Right lobe of liver (tissue), 6 donors: ENCODE measurements at regions of chrX and their contacts with region 1.

Region 1: DNA sequence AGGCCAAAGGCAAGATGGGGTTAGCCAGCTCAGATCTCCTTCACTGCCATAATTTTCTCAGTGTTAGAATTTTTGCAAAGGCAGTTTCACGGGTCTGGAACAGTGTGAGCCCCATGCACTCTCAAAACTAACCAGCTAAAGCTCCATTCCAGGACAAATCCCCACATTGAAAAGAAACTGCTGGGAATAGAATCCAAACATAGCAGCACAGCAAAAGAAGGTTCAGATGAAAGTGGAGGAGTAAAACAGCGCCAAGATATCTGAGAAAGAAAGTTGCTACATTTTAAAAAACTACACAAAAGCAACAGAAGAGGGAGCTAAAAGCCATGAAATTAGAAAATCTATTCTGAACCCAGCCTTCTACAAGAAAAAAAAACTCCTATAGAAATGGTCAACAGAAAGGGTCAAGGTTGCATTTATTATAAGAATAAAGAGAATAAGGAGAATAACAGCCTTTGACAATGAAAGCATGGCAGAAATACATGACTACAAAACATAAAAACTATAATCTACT is 39.6 kb upstream of the SLC7A3 start:
- DNase-seq: no peak
- ATAC-seq: peak in 3 of 4 donors; percentile 45 to 49 (median 48)
- H3K4me3 ChIP-seq: no peak overlapping the region
- H3K27ac ChIP-seq: no peak overlapping the region
- H3K4me1 ChIP-seq: no peaks in the 10 kb centered on the region
- H3K27me3 ChIP-seq: no peaks in the 10 kb centered on the region
- CTCF ChIP-seq: peak; percentile 24 to 39 (median 32)
- POLR2A ChIP-seq: no peak

Region 2: DNA sequence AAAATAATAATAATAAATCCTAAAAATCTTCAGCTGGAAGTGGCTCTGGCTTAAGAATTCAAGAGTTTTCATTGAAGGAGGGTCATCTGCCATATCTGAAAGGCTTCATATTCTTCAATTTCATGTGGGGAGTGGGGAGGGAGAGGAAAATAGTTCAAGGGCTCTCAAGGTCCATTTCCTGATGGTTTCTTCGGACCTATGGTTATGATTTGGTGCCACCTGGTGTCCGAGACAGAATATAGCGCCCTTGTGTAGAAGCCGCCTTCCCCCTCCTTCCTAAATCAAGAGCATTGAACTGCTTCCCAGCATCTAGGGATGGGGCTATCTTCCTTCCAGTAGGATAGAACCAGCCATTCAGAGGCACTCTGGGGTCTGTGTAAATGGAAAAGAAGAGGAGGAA is 208.4 kb after region 1 on chrX:
- intact Hi-C with region 1: loop called in 1 of 2 experiments (anchors 10 kb)
- DNase-seq: peak in 2 of 3 donors; percentile 37 to 49
- ATAC-seq: peak; percentile 53 to 69 (median 58)
- H3K4me3 ChIP-seq: no peak overlapping the region
- H3K27ac ChIP-seq: no peak overlapping the region
- H3K4me1 ChIP-seq: peaks cover 0 to 13% (median 0%) of the 10 kb centered on the region in 4 donors
- H3K27me3 ChIP-seq: no peaks in the 10 kb centered on the region
- CTCF ChIP-seq: peak; percentile 68 to 83 (median 76)
- POLR2A ChIP-seq: no peak